Activated T-helper 2 cell treated with anti-CD3 and anti-CD28 coated beads, Interferon-gamma antibody, Interleukin-2, Interleukin-4, amounts not matched to agents 10 μg/mL and 5 μg/mL and 100 μg/mL, durations not matched to agents 14 hours and 24 hours and 36 hours (primary cell): ENCODE measurements at regions of chr6 and their contacts with region 1.

Region 1: GRCh38 chr6:11144393-11144851 is 32.9 kb upstream of the ERVFRD-1 start:
- DNase-seq: peak; percentile 62
- H3K4me3 Mint-ChIP-seq: no peak overlapping the region
- H3K27ac Mint-ChIP-seq: no peak overlapping the region
- H3K4me1 Mint-ChIP-seq: peaks cover 12% of the 10 kb centered on the region
- H3K27me3 Mint-ChIP-seq: peaks cover 4% of the 10 kb centered on the region

Region 2: GRCh38 chr6:11172501-11173332 is 28.3 kb after region 1 on chr6:
- intact Hi-C with region 1: loop called (anchors 1 kb)
- DNase-seq: peak; percentile 50
- H3K4me3 Mint-ChIP-seq: peak overlapping the region; percentile 22
- H3K27ac Mint-ChIP-seq: no peak overlapping the region
- H3K4me1 Mint-ChIP-seq: peaks cover 18% of the 10 kb centered on the region
- H3K27me3 Mint-ChIP-seq: no peaks in the 10 kb centered on the region

Region 3: DNA sequence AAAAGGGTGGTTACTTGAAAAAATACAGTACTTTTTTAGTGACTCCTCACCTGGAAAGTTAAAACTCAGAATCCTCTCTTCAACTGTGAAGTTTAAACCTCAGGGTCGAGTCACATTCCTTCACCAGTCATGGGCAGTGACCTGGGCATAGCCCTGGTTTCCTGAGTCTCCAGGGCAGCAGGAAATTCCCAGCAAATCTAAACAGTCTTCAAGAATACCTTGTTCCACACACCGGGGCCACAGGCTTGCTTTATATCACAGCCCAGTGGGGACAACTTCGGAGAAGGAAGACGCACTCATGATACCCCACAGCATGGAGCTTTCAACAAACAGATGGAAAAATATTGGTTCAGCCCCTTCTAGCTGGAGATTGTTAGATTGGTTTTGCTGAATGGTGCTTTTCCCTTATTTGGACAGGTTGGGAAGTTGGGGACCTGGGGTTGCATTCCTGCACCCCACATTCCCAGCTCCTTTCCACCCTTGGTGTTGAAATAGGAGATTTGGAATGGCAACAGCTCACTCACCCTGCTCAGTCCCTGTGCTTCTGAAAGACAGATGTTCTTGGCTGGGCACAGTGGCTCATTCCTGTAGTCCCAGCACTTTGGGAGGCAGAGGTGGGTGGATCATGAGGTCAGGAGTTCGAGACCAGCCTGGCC is 280.1 kb after region 1 on chr6:
- intact Hi-C with region 1: loop called (anchors 5 kb)
- DNase-seq: no peak
- H3K4me3 Mint-ChIP-seq: no peak overlapping the region
- H3K27ac Mint-ChIP-seq: peak overlapping the region; percentile 43
- H3K4me1 Mint-ChIP-seq: peaks cover 53% of the 10 kb centered on the region
- H3K27me3 Mint-ChIP-seq: no peaks in the 10 kb centered on the region

Region 4: DNA sequence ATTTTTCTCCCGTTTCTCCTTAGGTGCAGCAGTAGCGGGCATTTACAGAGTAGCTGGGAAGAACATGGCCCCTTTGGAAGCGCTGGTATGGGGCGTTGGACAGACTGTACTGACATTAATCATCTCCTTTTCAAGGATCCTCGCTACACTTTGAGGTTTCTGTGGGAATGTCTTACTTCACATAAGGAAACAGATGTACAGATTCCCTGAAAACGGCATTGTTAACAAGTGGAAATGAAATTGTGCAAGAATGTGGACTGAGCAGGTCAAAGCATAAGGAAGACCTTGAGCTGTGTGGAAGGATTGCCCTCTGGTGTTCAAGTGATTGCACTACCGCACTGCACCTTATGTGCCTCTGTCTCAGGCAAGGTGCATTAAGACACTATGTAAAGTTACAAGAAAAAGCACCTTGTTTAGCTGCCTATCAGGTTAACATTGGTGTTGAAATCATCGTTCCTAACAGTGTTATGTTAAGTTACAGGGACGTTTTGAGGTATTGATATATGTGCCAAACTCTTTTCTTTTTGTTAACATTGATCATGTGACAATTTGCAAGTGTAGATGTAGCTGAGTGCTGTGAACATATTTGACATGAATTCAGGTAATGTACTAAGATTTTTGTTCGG is 431.1 kb after region 1 on chr6:
- intact Hi-C with region 1: loop called (anchors 2 kb)
- DNase-seq: peak; percentile 24
- H3K4me3 Mint-ChIP-seq: no peak overlapping the region
- H3K27ac Mint-ChIP-seq: no peak overlapping the region
- H3K4me1 Mint-ChIP-seq: peaks cover 3% of the 10 kb centered on the region
- H3K27me3 Mint-ChIP-seq: peaks cover 2% of the 10 kb centered on the region

Region 5: GRCh38 chr6:12174878-12175277 is 1030.5 kb after region 1 on chr6:
- intact Hi-C with region 1: no loop called
- DNase-seq: no peak
- H3K4me3 Mint-ChIP-seq: no peak overlapping the region
- H3K27ac Mint-ChIP-seq: no peak overlapping the region
- H3K4me1 Mint-ChIP-seq: no peaks in the 10 kb centered on the region
- H3K27me3 Mint-ChIP-seq: peaks cover 12% of the 10 kb centered on the region